ENCODE measurements at regions of chr5 and their contacts with region 1.

Region 1: GRCh38 chr5:40879163-40879942 is 29.9 kb upstream of the C7 start:
- DNase-seq: no peak
- H3K4me3 ChIP-seq: no peak overlapping the region
- H3K27ac ChIP-seq: no peak overlapping the region
- H3K4me1 ChIP-seq: no peaks in the 10 kb centered on the region
- H3K27me3 ChIP-seq: no peaks in the 10 kb centered on the region
- CTCF ChIP-seq: peak in 5 of 6 experiments; percentile 24 to 68 (median 58)
- POLR2A ChIP-seq: no peak

Region 2: DNA sequence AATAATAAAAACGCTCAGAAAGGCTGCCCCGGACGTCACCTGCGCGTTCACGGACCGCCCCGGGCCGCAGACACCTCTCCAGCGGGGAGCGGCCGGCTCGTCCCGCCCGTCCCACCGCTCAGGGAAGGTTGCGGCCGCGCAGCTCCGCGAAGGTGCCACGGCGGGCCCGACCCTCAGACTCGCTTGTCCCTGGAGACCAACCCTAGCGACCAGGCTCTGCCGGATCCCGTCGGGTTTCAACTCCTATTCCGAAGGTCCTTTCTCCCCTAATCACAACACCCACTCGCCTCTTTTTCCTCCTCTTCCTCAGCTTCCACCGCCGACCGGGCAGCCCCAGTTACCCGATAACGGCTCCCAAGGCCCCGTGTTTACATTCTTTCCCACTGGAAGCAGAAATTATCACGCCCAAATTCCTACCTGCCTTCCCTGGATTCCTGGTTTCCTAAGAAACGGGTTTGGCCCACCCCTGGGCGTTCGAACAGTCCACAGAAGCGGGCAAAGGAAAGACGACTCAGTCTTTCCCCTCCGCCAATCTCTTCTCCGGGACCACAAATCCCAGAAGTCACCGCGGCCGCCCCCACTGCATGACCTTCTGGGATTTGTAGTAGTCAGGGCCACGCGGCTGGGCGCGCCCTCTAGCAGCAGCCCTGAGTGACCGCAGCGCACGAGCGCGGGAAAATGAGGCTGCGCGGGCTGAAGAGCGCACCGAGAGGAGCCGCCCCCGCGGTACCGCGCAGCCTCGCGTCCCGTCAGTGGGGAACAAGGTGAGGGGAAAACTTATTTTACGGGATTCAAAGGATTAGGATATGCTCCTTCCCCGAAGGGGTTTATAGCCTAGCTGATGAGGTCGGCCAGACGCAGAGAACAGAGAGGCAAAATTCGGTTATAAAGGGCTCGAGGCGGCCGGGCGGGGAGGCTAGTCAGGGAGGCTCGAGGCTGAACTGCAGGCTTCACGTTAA is 123.7 kb before region 1 on chr5 and contains the start of gene TTC33:
- intact Hi-C with region 1: loop called (anchors 5 kb)
- DNase-seq: peak; percentile 95 to 97
- H3K4me3 ChIP-seq: peak within 1 kb of the TSS; percentile 55 to 70 (median 65)
- H3K27ac ChIP-seq: peak within 1 kb of the TSS; percentile 73 to 93 (median 91)
- H3K4me1 ChIP-seq: peaks cover 8 to 9% of the 10 kb centered on the region in 2 donors
- H3K27me3 ChIP-seq: no peaks in the 10 kb centered on the region
- CTCF ChIP-seq: peak in 5 of 6 experiments; percentile 17 to 65 (median 49)
- POLR2A ChIP-seq: peak in 1 of 2 donors; percentile 75
- total RNA-seq, gene TTC33: 18.7 to 35.2 (median 24.9) TPM

Region 3: GRCh38 chr5:40834849-40835787 is 44.2 kb before region 1 on chr5 and contains the start of gene RPL37:
- intact Hi-C with region 1: loop called (anchors 5 kb)
- DNase-seq: peak; percentile 96
- H3K4me3 ChIP-seq: peak within 1 kb of the TSS; percentile 68 to 91 (median 74)
- H3K27ac ChIP-seq: peak within 1 kb of the TSS; percentile 95 to 99 (median 98)
- H3K4me1 ChIP-seq: peaks cover 14 to 22% of the 10 kb centered on the region in 2 donors
- H3K27me3 ChIP-seq: no peaks in the 10 kb centered on the region
- CTCF ChIP-seq: peak in 1 of 6 experiments; percentile 3
- POLR2A ChIP-seq: peak; percentile 2 to 94
- total RNA-seq, gene RPL37: 54.4 to 499 (median 123) TPM

Measured in thyroid gland (tissue), 4 donors.